ENCODE measurements at regions of chr6 and their contacts with region 1.

Region 1: DNA sequence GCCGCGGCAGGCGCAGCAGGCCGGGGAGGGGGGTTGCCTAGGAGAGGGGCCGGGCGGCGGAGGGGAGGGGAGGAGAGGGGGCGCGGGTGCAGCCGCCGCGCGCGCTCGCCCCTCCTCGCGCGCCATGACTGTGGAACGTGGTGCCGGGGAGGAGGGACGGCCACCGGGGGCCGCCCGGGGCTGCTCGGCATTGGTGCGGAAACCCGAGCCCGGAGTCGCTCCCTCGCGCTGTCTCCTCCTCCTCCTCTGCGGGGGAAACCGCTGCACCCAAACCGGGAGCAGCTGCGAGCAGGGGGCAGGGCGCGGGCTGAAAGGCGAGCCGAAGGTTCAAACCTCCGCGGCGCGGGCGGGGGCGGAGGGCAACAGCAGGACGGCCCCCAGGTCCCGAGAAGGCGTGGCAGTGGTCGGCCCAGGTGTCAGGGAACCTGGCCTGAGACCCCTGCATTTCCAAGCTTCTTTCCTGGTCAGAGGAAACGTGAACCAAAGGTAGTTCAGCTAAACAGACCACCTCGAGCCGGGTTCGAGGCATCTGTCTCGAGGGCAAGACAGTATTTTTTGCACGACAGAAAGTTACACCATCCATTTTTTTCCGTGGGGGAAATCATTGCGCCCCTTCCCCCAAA is 1.4 kb upstream of the TRERF1 start:
- DNase-seq: peak; percentile 26 to 40 (median 33)
- H3K4me3 ChIP-seq: peak overlapping the region; percentile 53 to 96 (median 63)
- H3K4me3 Mint-ChIP-seq: peak overlapping the region; percentile 98 to 100
- H3K27ac ChIP-seq: peak overlapping the region; percentile 39 to 82
- H3K27ac Mint-ChIP-seq: peak overlapping the region in 1 of 7 donors; percentile 13
- H3K4me1 ChIP-seq: peaks cover 42 to 43% of the 10 kb centered on the region in 2 donors
- H3K4me1 Mint-ChIP-seq: peaks cover 38% of the 10 kb centered on the region
- H3K27me3 ChIP-seq: peaks cover 0 to 4% of the 10 kb centered on the region in 2 donors
- H3K27me3 Mint-ChIP-seq: peaks cover 11 to 19% (median 14%) of the 10 kb centered on the region in 3 donors
- CTCF ChIP-seq: no peak

Region 2: DNA sequence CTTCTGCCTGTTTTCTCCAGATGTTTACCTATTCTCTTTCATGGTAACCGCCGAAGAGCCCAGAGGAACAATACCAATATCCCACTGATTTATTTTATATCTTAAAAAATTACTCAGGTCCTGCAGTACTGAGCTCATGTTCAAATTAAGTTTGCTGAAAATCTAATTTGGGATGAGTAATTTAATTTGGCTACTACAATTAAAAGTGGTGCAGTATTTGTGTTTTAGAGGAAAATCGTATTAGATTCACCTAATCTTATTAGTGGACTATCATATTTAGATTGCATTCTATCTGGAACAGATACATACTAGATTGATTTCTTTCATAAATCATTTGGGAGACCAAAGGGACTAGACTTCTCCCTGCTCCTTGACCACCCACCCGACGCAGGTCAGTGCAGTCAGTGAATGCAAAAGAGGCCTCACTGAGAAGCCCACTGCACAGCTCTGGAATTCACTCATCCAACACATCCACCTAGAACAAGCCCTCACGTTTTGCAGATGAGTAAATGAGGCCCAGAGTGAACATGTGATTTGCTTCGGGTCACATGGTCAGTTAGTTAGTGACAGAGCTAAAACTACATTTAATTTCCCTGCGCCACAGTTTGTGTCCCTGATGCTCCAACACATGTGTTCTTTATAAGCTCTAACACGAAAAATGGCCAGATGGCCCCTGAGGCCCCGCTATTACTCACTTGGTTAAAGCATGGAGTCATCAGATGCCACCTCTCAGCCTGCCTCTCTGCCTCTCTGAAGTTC is 103.2 kb before region 1 on chr6:
- intact Hi-C with region 1: no loop called
- DNase-seq: no peak
- H3K4me3 ChIP-seq: no peak overlapping the region
- H3K4me3 Mint-ChIP-seq: no peak overlapping the region
- H3K27ac ChIP-seq: no peak overlapping the region
- H3K27ac Mint-ChIP-seq: peak overlapping the region in 2 of 7 donors; percentile 13 to 46
- H3K4me1 ChIP-seq: no peaks in the 10 kb centered on the region
- H3K4me1 Mint-ChIP-seq: peaks cover 14% of the 10 kb centered on the region
- H3K27me3 ChIP-seq: no peaks in the 10 kb centered on the region
- H3K27me3 Mint-ChIP-seq: peaks cover 0 to 1% (median 0%) of the 10 kb centered on the region in 3 donors
- CTCF ChIP-seq: no peak

Region 3: DNA sequence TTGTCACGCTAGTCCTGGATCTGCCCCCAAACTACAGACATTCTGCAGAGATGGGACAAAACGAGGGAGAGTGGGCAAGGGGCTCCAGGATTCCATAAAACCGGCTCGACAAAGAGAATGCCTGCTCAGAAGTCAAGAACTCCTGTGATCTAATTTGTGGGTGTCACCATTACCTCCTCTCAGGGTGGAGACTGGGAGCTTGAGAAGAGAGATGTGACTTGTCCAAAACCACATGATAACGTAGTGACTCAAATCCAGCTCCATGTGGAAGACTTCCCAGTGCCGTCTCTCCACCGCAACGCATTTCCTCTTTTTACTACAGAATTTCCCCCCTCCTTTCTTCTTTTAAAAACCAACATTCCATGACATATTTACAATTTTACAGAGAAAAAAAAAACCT is 45.8 kb before region 1 on chr6:
- intact Hi-C with region 1: loop called in 1 of 2 experiments (anchors 5 kb)
- DNase-seq: peak; percentile 66 to 93 (median 72)
- H3K4me3 ChIP-seq: peak overlapping the region in 1 of 3 experiments; percentile 12
- H3K4me3 Mint-ChIP-seq: no peak overlapping the region
- H3K27ac ChIP-seq: peak overlapping the region; percentile 20 to 67
- H3K27ac Mint-ChIP-seq: peak overlapping the region in 6 of 7 donors; percentile 63 to 90 (median 80)
- H3K4me1 ChIP-seq: peaks cover 80 to 89% of the 10 kb centered on the region in 2 donors
- H3K4me1 Mint-ChIP-seq: peaks cover 80% of the 10 kb centered on the region
- H3K27me3 ChIP-seq: no peaks in the 10 kb centered on the region
- H3K27me3 Mint-ChIP-seq: no peaks in the 10 kb centered on the region
- CTCF ChIP-seq: no peak

Region 4: GRCh38 chr6:42417641-42418112 is 35.5 kb before region 1 on chr6:
- intact Hi-C with region 1: loop called in 1 of 2 experiments (anchors 5 kb)
- DNase-seq: no peak
- H3K4me3 ChIP-seq: no peak overlapping the region
- H3K4me3 Mint-ChIP-seq: no peak overlapping the region
- H3K27ac ChIP-seq: peak overlapping the region in 1 of 2 donors; percentile 13
- H3K27ac Mint-ChIP-seq: peak overlapping the region in 3 of 7 donors; percentile 31 to 76 (median 60)
- H3K4me1 ChIP-seq: peaks cover 6 to 10% of the 10 kb centered on the region in 2 donors
- H3K4me1 Mint-ChIP-seq: peaks cover 35% of the 10 kb centered on the region
- H3K27me3 ChIP-seq: no peaks in the 10 kb centered on the region
- H3K27me3 Mint-ChIP-seq: peaks cover 0 to 2% (median 0%) of the 10 kb centered on the region in 3 donors
- CTCF ChIP-seq: no peak

Measured in CD14-positive monocyte (primary cell).